Heart left ventricle (tissue), 16 donors: ENCODE measurements at regions of chr9 and their contacts with region 1.

Region 1: GRCh38 chr9:19028835-19029451 is 4.1 kb downstream of the SAXO1 start:
- DNase-seq: peak in 4 of 5 donors; percentile 36 to 47 (median 37)
- ATAC-seq: peak; percentile 45 to 80 (median 68)
- H3K4me3 ChIP-seq: no peak overlapping the region
- H3K27ac ChIP-seq: no peak overlapping the region
- H3K4me1 ChIP-seq: peaks cover 0 to 3% (median 0%) of the 10 kb centered on the region in 12 donors
- H3K27me3 ChIP-seq: peaks cover 0 to 7% (median 0%) of the 10 kb centered on the region in 9 donors
- CTCF ChIP-seq: peak; percentile 65 to 85 (median 78)
- POLR2A ChIP-seq: no peak

Region 2: GRCh38 chr9:17824191-17824590 is 1204.8 kb before region 1 on chr9:
- intact Hi-C with region 1: loop called in 4 of 10 experiments (anchors 10 kb)
- DNase-seq: no peak
- ATAC-seq: peak in 3 of 4 donors; percentile 51 to 83 (median 61)
- H3K4me3 ChIP-seq: no peak overlapping the region
- H3K27ac ChIP-seq: peak overlapping the region in 5 of 12 donors; percentile 7 to 68 (median 46)
- H3K4me1 ChIP-seq: peaks cover 0 to 18% (median 10%) of the 10 kb centered on the region in 12 donors
- H3K27me3 ChIP-seq: no peaks in the 10 kb centered on the region
- CTCF ChIP-seq: peak in 5 of 12 donors; percentile 13 to 30 (median 14)
- POLR2A ChIP-seq: no peak

Region 3: GRCh38 chr9:18255158-18255629 is 773.7 kb before region 1 on chr9:
- intact Hi-C with region 1: loop called (anchors 1 to 5 kb)
- DNase-seq: peak; percentile 76 to 84 (median 80)
- ATAC-seq: peak; percentile 71 to 88 (median 85)
- H3K4me3 ChIP-seq: no peak overlapping the region
- H3K27ac ChIP-seq: no peak overlapping the region
- H3K4me1 ChIP-seq: peaks cover 0 to 11% (median 1%) of the 10 kb centered on the region in 12 donors
- H3K27me3 ChIP-seq: no peaks in the 10 kb centered on the region
- CTCF ChIP-seq: peak; percentile 94 to 99 (median 97)
- POLR2A ChIP-seq: no peak

Region 4: DNA sequence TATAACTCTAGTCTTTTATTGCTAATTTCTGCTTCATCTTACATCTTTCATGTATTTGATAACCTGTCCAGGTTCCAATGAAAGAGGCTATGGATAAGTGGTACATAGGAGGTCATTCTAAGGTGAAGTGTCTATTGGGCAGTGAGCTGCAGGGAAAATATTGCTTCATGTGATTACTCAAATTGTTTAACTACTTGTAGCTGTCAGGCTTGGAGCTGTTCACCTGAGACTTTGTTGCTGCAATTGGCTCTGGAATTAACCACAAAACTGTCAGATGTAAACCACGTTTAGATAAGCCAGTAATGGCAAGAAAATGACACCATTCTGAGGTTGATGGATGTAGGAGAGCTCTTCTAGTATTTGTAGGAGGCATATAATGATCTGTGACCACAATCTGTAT is 529.0 kb before region 1 on chr9:
- intact Hi-C with region 1: loop called in 1 of 10 experiments (anchors 5 kb)
- DNase-seq: no peak
- ATAC-seq: peak in 1 of 4 donors; percentile 36
- H3K4me3 ChIP-seq: no peak overlapping the region
- H3K27ac ChIP-seq: no peak overlapping the region
- H3K4me1 ChIP-seq: peaks cover 0 to 10% (median 0%) of the 10 kb centered on the region in 12 donors
- H3K27me3 ChIP-seq: no peaks in the 10 kb centered on the region
- CTCF ChIP-seq: no peak
- POLR2A ChIP-seq: no peak

Region 5: DNA sequence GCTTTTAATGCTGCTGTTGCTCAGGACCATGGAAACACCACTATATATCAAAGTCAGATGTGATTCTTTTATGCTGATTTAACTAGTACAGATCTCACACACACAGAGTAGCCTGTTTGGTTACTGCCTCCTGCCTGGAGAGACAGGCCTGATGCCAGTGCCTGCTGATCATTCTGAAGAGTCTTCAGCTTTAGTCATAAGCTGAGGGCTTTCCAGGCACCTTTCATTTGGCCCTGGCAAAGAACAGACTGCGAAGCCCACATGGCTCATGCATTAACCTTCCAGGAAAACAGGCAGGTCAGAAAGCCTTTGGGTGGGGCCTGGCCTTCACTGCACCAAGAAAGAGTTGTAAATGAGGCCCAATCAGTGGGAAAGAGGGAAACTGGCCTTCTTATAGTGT is 140.7 kb before region 1 on chr9:
- intact Hi-C with region 1: no loop called
- DNase-seq: peak in 3 of 5 donors; percentile 29 to 55 (median 37)
- ATAC-seq: peak in 3 of 4 donors; percentile 72 to 92 (median 87)
- H3K4me3 ChIP-seq: no peak overlapping the region
- H3K27ac ChIP-seq: no peak overlapping the region
- H3K4me1 ChIP-seq: peaks cover 0 to 10% (median 1%) of the 10 kb centered on the region in 12 donors
- H3K27me3 ChIP-seq: no peaks in the 10 kb centered on the region
- CTCF ChIP-seq: no peak
- POLR2A ChIP-seq: no peak